CD4-positive, alpha-beta memory T cell (primary cell): ENCODE measurements at regions of chr15 and their contacts with region 1.

Region 1: DNA sequence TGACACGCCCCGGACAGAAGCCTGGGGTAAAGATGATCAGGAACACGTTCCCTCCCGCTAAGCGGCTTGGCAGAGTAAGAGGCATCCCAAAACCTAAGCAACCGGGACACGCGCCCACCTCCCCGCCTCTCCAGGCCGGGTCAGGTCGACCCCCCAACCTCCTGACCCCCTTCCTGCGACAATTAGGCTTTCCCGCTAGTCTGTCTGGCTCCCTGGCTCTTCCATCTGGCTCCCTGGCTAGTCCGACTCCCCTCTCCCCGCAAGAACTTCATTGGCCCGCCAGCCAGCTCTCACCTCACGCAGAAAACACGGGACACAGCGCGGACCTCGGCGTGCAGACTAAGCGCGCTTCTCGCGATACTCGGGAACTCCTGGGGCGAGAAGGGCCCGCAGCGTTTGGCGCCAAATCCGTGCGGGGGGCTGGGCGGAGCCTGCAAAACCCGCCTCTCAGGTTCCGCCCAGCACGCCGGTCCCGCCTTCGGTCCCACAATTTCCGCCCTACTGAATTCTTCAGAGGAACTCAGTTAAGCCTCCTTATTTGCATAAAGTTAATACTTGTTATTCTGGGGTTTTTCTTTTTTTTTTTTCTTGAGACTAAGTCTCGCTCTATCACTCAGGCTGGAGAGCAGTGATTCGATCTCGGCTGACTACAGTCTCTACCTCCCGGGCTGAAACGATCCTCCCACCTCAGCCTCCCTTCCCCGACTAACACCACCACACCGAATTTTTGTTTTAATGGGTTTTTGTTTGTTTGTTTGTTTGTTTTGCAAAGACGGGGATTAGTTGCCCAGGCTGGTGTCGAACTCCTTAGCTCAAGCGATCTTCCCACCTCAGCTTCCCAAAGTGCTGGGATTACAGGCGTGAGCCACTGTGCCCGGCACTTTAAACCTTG is at the start of gene TIPIN:
- DNase-seq: peak; percentile 95 to 97 (median 96)
- H3K4me3 ChIP-seq: peak within 1 kb of the TSS; percentile 79 to 80
- H3K4me3 Mint-ChIP-seq: peak within 1 kb of the TSS; percentile 91 to 99 (median 98)
- H3K27ac ChIP-seq: peak within 1 kb of the TSS; percentile 66
- H3K27ac Mint-ChIP-seq: peak within 1 kb of the TSS; percentile 90 to 98 (median 97)
- H3K4me1 ChIP-seq: peaks cover 15% of the 10 kb centered on the region
- H3K4me1 Mint-ChIP-seq: peaks cover 15 to 23% (median 19%) of the 10 kb centered on the region in 4 donors
- H3K27me3 ChIP-seq: no peaks in the 10 kb centered on the region
- H3K27me3 Mint-ChIP-seq: no peaks in the 10 kb centered on the region
- total RNA-seq, gene TIPIN: 5.9 to 9.0 TPM

Region 2: GRCh38 chr15:66293419-66294156 is 63.0 kb before region 1 on chr15 and contains the start of gene DIS3L:
- CTCF ChIA-PET with region 1: no interaction called
- POLR2A ChIA-PET with region 1: interaction called, 4 read pairs
- intact Hi-C with region 1: loop called (anchors 2 kb)
- DNase-seq: peak; percentile 65 to 78 (median 72)
- H3K4me3 ChIP-seq: peak within 1 kb of the TSS; percentile 57 to 91
- H3K4me3 Mint-ChIP-seq: peak within 1 kb of the TSS; percentile 85 to 93 (median 90)
- H3K27ac ChIP-seq: peak within 1 kb of the TSS; percentile 91
- H3K27ac Mint-ChIP-seq: peak within 1 kb of the TSS; percentile 93 to 96 (median 95)
- H3K4me1 ChIP-seq: peaks cover 50% of the 10 kb centered on the region
- H3K4me1 Mint-ChIP-seq: peaks cover 26 to 50% (median 41%) of the 10 kb centered on the region in 4 donors
- H3K27me3 ChIP-seq: no peaks in the 10 kb centered on the region
- H3K27me3 Mint-ChIP-seq: no peaks in the 10 kb centered on the region
- total RNA-seq, gene DIS3L: 36.8 to 40.3 TPM

Region 3: DNA sequence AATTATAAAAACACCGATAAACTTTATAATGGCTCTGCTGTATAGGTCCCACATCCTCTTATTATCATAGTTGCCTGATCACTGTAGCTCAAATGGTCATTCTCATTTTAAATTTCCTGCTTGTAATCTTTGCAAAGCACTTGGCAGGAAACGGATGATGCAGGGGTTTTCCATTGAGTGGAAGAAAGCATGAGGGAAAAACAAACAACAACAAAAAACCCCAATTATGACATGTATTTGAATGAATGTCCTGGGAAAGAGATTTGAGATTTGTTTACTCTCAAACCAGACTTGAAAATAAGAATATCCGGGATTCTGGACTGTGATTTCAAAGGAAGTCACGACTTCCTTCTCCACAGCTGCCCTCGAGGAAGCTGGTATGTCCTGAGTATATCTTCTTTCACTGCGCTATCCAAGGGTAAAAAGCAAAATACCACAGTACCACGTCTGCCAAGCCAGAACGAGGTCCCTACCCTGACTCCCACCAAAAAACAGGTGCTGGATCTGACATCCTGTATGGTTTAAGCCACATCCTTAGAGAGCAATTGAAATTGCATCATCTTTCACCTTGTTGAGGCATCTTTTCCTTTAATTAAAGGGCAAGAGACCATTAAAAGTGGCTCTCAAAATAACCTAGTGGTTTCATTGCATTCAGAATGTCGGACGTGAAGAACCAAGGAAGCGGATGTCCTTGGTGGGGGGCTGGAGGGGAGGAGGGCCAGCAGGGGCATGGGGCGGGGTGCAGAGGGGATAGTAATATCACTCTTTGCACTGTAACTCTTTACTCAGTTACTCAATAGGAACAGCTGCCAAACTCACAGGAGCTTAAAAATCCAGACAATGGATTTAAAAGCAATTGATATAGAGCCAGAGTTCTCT is 13.4 kb after region 1 on chr15:
- CTCF ChIA-PET with region 1: no interaction called
- POLR2A ChIA-PET with region 1: interaction called, 10 read pairs
- intact Hi-C with region 1: no loop called
- DNase-seq: peak in 4 of 5 donors; percentile 12 to 48 (median 36)
- H3K4me3 ChIP-seq: peak overlapping the region; percentile 2 to 34
- H3K4me3 Mint-ChIP-seq: peak overlapping the region; percentile 13 to 90 (median 84)
- H3K27ac ChIP-seq: peak overlapping the region; percentile 63
- H3K27ac Mint-ChIP-seq: peak overlapping the region; percentile 38 to 95 (median 90)
- H3K4me1 ChIP-seq: peaks cover 11% of the 10 kb centered on the region
- H3K4me1 Mint-ChIP-seq: peaks cover 9 to 20% (median 13%) of the 10 kb centered on the region in 4 donors
- H3K27me3 ChIP-seq: no peaks in the 10 kb centered on the region
- H3K27me3 Mint-ChIP-seq: no peaks in the 10 kb centered on the region

Region 4: DNA sequence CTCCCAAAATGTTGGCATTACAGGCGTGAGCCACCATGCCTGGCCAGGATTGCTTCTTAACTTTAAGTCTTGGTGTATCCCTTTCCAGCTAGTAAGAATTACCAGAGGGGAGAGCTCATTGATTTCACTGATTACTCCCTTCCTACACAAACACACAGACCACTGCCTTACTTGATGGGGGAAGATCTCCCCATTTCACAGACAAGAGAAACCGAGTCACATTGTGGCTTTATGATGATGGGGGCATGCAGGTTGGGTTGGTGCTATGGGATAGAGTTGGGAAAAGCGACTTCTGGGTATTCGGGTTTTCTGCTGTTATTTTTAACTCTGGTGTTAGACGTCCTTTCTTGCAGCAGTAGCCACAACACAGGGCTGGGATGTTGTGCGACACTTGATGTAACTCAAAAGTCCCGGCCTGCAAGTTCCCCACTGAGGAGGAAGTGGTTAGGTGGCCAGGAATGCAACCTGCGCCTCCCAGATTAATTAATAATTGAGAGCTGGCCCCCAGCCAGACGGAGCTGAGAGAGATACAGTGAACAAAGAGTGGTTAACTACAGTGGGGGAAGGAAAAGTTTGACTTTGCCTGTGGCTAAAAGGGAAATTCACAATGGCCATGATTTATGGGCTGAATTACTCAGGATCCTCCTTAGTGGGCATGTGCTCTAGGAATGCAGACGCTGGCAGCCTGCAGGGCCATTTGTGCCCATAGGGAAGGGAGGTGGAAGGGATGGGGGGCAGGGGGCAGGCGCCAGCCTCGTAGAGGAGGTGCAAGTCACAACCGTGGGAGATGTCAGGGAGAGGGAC is 409.1 kb after region 1 on chr15:
- CTCF ChIA-PET with region 1: no interaction called
- POLR2A ChIA-PET with region 1: no interaction called
- intact Hi-C with region 1: no loop called
- DNase-seq: no peak
- H3K4me3 ChIP-seq: no peak overlapping the region
- H3K4me3 Mint-ChIP-seq: no peak overlapping the region
- H3K27ac ChIP-seq: no peak overlapping the region
- H3K27ac Mint-ChIP-seq: peak overlapping the region in 2 of 7 donors; percentile 7 to 44
- H3K4me1 ChIP-seq: peaks cover 3% of the 10 kb centered on the region
- H3K4me1 Mint-ChIP-seq: peaks cover 0 to 6% (median 0%) of the 10 kb centered on the region in 4 donors
- H3K27me3 ChIP-seq: peaks cover 6% of the 10 kb centered on the region
- H3K27me3 Mint-ChIP-seq: peaks cover 14 to 36% of the 10 kb centered on the region in 2 donors

Region 5: DNA sequence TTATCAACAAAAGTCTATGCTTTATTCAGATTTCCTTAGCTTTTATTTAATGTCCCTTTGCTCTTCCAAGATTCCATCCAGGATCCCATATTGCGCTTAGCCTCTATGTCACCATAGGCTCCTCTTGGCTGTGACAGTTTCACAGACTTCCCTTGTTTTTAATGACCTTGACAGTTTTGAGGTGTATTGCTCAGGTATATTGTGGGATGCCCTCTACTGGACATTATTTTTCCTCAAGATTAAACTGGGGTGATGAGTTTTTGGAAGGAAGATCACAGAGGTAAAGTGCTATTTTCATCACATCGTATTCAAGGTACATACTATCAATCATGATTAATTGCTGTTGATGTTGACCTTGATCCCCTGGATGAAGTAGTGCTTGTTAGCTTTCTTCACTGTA is 609.7 kb after region 1 on chr15:
- CTCF ChIA-PET with region 1: no interaction called
- POLR2A ChIA-PET with region 1: no interaction called
- intact Hi-C with region 1: no loop called
- DNase-seq: peak in 3 of 5 donors; percentile 6 to 16 (median 11)
- H3K4me3 ChIP-seq: no peak overlapping the region
- H3K4me3 Mint-ChIP-seq: no peak overlapping the region
- H3K27ac ChIP-seq: no peak overlapping the region
- H3K27ac Mint-ChIP-seq: no peak overlapping the region
- H3K4me1 ChIP-seq: no peaks in the 10 kb centered on the region
- H3K4me1 Mint-ChIP-seq: peaks cover 0 to 2% (median 0%) of the 10 kb centered on the region in 4 donors
- H3K27me3 ChIP-seq: no peaks in the 10 kb centered on the region
- H3K27me3 Mint-ChIP-seq: no peaks in the 10 kb centered on the region